ENCODE measurements at regions of chr1 and their contacts with region 1.

Region 1: DNA sequence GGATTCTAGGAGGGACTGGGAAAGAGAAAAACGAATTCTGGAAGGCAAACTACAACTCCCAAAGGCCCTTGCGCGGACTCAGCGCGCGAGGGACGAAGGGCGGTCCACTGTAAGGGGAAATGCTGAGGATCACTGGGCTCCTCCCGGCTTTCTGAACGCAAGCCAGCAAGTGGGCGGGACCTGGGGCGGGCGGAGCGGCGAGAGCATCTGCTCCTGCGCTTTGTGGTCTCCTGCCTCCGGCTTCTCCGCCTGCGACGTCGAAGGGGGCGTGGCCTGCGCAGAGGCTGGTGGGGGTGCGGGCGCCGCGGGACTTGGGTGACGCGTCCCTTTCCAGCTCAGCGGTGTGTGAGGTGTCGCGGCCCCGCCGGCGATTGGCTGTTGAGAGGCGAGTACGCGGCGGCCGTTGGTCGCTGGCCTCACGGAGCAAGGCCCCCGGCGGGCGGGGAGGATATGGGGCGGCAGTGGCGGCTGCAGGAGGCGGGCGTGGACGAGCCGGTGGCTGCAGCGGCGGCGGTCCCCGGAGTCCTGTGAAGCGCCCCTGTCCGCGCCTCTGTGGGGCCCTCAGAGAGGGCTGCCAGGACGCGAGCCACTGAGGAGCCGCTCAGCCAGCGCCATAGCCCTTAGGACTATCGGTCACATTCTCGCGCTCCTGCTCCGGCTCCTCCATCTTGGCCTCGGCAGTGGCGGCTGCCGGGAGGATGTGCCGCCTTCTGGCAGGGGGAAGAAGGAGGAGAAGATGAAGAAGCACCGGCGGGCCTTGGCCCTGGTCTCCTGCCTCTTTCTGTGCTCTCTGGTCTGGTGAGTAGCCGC is at the start of gene SUCO:
- DNase-seq: peak; percentile 98 to 100 (median 100)
- ATAC-seq: peak; percentile 83 to 89 (median 85)
- H3K4me3 ChIP-seq: peak within 1 kb of the TSS; percentile 85 to 93
- H3K4me3 Mint-ChIP-seq: peak within 1 kb of the TSS; percentile 94 to 95 (median 95)
- H3K27ac ChIP-seq: peak within 1 kb of the TSS; percentile 100
- H3K27ac Mint-ChIP-seq: peak within 1 kb of the TSS; percentile 100
- H3K4me1 ChIP-seq: peaks cover 0 to 28% of the 10 kb centered on the region in 2 experiments
- H3K4me1 Mint-ChIP-seq: peaks cover 46 to 61% (median 54%) of the 10 kb centered on the region in 3 donors
- H3K27me3 ChIP-seq: no peaks in the 10 kb centered on the region
- H3K27me3 Mint-ChIP-seq: peaks cover 2 to 8% of the 10 kb centered on the region in 2 donors
- total RNA-seq, gene SUCO: 43.7 to 87.1 (median 47.9) TPM

Region 2: DNA sequence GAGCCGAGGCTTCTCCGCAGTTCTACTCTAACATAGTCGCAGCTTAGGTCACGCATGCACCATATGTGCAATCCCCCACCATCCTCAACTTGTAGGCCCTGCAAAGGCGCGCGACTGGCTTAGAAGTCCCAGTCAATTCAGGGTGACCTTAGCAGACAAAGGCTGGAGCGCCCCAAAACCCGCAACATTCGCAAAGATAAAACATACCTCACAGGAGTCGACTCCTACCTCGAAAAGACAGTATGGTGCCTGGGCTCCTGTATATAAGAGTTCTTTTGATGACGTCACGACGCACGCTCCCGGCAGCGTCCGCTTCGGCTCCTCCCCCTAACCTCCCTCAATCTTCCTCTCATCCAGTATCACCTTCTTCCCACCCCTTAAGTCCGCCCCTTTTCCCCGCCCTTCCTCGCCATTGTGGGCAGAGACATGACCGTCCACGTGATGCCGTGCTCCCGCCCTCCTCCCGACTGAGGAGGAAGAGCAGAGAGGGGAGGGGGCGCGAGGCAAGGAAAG is 1334.9 kb after region 1 on chr1 and contains the start of gene GAS5:
- CTCF ChIA-PET with region 1: no interaction called
- POLR2A ChIA-PET with region 1: interaction called in 1 of 2 experiments, 10 read pairs
- DNase-seq: peak; percentile 96 to 100 (median 98)
- ATAC-seq: peak; percentile 82 to 83 (median 83)
- H3K4me3 ChIP-seq: peak within 1 kb of the TSS; percentile 83 to 94
- H3K4me3 Mint-ChIP-seq: peak within 1 kb of the TSS; percentile 92 to 96 (median 95)
- H3K27ac ChIP-seq: peak within 1 kb of the TSS; percentile 93
- H3K27ac Mint-ChIP-seq: peak within 1 kb of the TSS; percentile 97 to 98
- H3K4me1 ChIP-seq: peaks cover 24 to 48% of the 10 kb centered on the region in 2 experiments
- H3K4me1 Mint-ChIP-seq: peaks cover 74 to 83% (median 77%) of the 10 kb centered on the region in 3 donors
- H3K27me3 ChIP-seq: no peaks in the 10 kb centered on the region
- H3K27me3 Mint-ChIP-seq: no peaks in the 10 kb centered on the region
- total RNA-seq, gene GAS5: 638 to 881 (median 772) TPM